B cell (primary cell): ENCODE measurements at regions of chr1 and their contacts with region 1.

Region 1: GRCh38 chr1:151594143-151594625 is 17.7 kb upstream of the SNX27 start:
- DNase-seq: peak; percentile 87
- ATAC-seq: peak; percentile 97
- H3K4me3 ChIP-seq: peak overlapping the region in 4 of 5 experiments; percentile 21 to 41 (median 30)
- H3K4me3 Mint-ChIP-seq: peak overlapping the region; percentile 71
- H3K27ac ChIP-seq: no peak overlapping the region
- H3K27ac Mint-ChIP-seq: peak overlapping the region; percentile 0
- H3K4me1 ChIP-seq: peaks cover 7 to 9% of the 10 kb centered on the region in 2 donors
- H3K4me1 Mint-ChIP-seq: peaks cover 9% of the 10 kb centered on the region
- H3K27me3 ChIP-seq: peaks cover 0 to 3% (median 0%) of the 10 kb centered on the region in 4 experiments
- H3K27me3 Mint-ChIP-seq: peaks cover 11% of the 10 kb centered on the region
- CTCF ChIP-seq: peak; percentile 94

Region 2: DNA sequence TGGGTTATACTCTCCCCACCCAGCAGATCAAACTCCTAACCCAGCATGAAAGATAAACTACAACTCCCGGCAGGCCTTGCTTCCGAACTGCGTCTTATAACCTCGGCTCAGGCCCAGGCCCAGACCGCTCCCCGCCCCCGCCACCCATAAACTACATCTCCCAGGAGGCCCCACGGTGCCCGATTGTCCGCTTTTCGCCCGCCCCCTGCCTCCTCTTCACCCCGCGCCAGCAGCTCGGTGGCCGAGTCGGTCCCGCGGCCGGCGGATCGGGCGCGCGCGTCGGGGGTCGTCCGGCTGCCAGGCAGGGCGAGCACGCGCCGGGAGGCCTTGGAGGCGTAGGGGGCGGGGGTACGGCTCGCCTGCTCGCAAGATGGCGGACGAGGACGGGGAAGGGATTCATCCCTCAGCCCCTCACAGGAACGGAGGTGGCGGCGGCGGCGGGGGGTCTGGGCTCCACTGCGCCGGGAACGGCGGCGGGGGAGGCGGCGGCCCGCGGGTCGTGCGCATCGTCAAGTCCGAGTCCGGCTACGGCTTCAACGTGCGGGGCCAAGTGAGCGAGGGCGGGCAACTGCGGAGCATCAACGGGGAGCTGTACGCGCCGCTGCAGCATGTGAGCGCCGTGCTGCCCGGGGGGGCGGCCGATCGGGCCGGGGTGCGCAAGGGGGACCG is 17.8 kb after region 1 on chr1 and contains the start of gene SNX27:
- CTCF ChIA-PET with region 1: interaction called, 11 read pairs
- POLR2A ChIA-PET with region 1: no interaction called
- intact Hi-C with region 1: no loop called
- DNase-seq: peak; percentile 94
- ATAC-seq: peak; percentile 96
- H3K4me3 ChIP-seq: peak within 1 kb of the TSS; percentile 52 to 94 (median 84)
- H3K4me3 Mint-ChIP-seq: peak within 1 kb of the TSS; percentile 91
- H3K27ac ChIP-seq: peak within 1 kb of the TSS in 1 of 2 donors; percentile 79
- H3K27ac Mint-ChIP-seq: peak within 1 kb of the TSS; percentile 94
- H3K4me1 ChIP-seq: peaks cover 11 to 18% of the 10 kb centered on the region in 2 donors
- H3K4me1 Mint-ChIP-seq: peaks cover 32% of the 10 kb centered on the region
- H3K27me3 ChIP-seq: peaks cover 0 to 3% (median 1%) of the 10 kb centered on the region in 4 experiments
- H3K27me3 Mint-ChIP-seq: peaks cover 5% of the 10 kb centered on the region
- CTCF ChIP-seq: no peak
- total RNA-seq, gene SNX27: 43.2 and 45.6 TPM in 2 replicates

Region 3: DNA sequence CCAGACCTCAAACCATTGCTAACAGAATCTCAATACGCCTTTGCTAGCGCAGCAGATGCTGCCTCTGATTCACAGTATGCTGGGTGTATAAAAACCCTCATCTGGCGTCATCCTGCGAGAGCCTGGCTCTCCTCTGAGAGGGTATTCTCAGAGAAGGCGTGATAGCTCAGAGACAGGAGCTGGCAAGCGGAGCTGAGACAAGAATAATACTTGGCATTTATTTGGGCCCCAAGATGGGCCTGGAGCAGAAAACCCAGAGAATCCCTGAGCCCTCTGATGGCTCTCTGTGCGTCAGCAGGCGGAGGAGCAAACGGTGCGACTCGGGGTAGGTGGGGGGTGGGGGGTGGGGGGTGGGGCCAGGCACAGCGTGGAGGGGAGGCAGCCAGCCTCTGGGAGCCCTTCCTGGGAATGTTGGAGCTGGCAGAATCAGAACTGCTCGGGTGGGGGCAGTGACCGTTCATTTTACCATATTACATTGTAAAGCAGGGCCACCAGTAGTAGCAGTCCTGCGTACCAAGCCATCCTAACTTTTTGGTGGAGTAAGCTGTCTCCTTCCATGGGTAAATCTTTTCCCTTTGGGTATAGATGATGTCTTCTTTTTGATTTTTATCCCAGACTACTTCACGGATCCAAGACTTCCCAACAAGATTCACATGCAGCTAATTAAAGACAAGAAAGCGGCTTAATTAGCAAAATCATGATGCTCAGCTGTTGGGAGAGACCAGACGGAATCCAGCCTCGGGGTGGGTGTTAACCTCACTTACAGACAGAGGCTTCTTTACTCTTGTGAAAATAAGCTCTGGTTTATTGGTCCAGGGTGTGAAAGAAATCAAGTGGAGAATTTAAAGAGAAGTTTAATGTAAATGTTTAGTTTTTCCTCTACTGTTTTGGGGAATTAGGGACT is 134.2 kb after region 1 on chr1:
- CTCF ChIA-PET with region 1: interaction called, 12 read pairs
- POLR2A ChIA-PET with region 1: no interaction called
- intact Hi-C with region 1: no loop called
- DNase-seq: no peak
- ATAC-seq: no peak
- H3K4me3 ChIP-seq: no peak overlapping the region
- H3K4me3 Mint-ChIP-seq: no peak overlapping the region
- H3K27ac ChIP-seq: no peak overlapping the region
- H3K27ac Mint-ChIP-seq: no peak overlapping the region
- H3K4me1 ChIP-seq: no peaks in the 10 kb centered on the region
- H3K4me1 Mint-ChIP-seq: no peaks in the 10 kb centered on the region
- H3K27me3 ChIP-seq: peaks cover 0 to 43% (median 22%) of the 10 kb centered on the region in 4 experiments
- H3K27me3 Mint-ChIP-seq: peaks cover 70% of the 10 kb centered on the region
- CTCF ChIP-seq: no peak

Region 4: GRCh38 chr1:151739590-151740375 is 145.6 kb after region 1 on chr1:
- CTCF ChIA-PET with region 1: interaction called, 12 read pairs
- POLR2A ChIA-PET with region 1: no interaction called
- intact Hi-C with region 1: loop called (anchors 1 kb)
- DNase-seq: no peak
- ATAC-seq: no peak
- H3K4me3 ChIP-seq: no peak overlapping the region
- H3K4me3 Mint-ChIP-seq: no peak overlapping the region
- H3K27ac ChIP-seq: no peak overlapping the region
- H3K27ac Mint-ChIP-seq: no peak overlapping the region
- H3K4me1 ChIP-seq: no peaks in the 10 kb centered on the region
- H3K4me1 Mint-ChIP-seq: no peaks in the 10 kb centered on the region
- H3K27me3 ChIP-seq: peaks cover 0 to 6% (median 1%) of the 10 kb centered on the region in 4 experiments
- H3K27me3 Mint-ChIP-seq: no peaks in the 10 kb centered on the region
- CTCF ChIP-seq: no peak

Region 5: DNA sequence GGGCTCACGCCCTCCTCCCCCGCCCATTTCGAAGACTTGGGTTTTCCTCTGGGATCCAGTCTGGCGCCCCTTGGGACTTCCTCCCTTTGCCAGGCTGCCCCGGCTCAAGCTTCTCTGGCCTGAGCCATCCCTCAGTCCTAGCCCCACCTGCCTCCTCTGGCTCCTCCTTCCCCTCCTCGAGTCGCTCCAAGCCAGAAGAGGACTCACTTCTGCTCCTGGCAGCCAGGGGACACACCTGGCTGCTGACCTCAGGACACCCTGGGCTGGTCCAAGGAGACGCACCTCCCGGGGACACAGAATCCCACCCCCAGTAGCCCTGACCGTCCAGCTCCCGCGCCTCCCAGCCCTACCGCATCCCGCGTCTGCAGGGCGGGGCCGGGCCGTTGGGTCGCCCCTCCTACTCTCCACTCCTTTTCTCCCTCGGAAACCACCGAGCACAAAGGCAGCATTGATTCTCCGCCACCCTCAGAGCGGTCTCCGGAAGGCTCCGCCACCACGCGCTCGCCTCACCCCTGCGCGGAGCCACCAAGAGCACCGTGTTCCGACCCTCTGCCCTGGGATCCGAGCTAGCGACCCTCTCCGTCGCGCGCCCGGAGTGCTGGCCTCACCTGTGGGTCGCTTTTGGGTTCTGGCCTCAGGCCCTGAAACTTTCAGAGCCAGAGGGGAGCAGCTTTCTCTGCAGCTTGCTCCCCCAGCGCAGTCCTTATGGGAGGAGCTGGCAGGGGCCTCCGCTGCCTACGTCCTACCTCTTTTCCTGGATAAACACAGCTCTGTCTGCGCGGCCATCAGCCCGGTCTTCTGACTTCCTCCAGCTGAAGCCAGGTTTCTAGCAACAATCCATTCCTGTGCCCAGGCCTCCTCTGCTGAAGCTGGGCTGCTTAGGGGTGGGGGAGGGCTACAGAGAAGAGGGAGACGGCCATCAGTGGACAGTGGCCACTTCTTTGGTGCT is 245.5 kb after region 1 on chr1 and contains the start of gene C2CD4D:
- CTCF ChIA-PET with region 1: interaction called, 14 read pairs
- POLR2A ChIA-PET with region 1: no interaction called
- intact Hi-C with region 1: loop called (anchors 1 kb)
- DNase-seq: peak; percentile 78
- ATAC-seq: peak; percentile 53
- H3K4me3 ChIP-seq: peak within 1 kb of the TSS in 4 of 5 experiments; percentile 36 to 56 (median 44)
- H3K4me3 Mint-ChIP-seq: peak within 1 kb of the TSS; percentile 87
- H3K27ac ChIP-seq: no peak within 1 kb of the TSS
- H3K27ac Mint-ChIP-seq: peak within 1 kb of the TSS; percentile 81
- H3K4me1 ChIP-seq: peaks cover 36 to 41% of the 10 kb centered on the region in 2 donors
- H3K4me1 Mint-ChIP-seq: peaks cover 38% of the 10 kb centered on the region
- H3K27me3 ChIP-seq: peaks cover 0 to 20% (median 7%) of the 10 kb centered on the region in 4 experiments
- H3K27me3 Mint-ChIP-seq: peaks cover 10% of the 10 kb centered on the region
- CTCF ChIP-seq: no peak
- total RNA-seq, gene C2CD4D: not detected in 2 replicates

Region 6: DNA sequence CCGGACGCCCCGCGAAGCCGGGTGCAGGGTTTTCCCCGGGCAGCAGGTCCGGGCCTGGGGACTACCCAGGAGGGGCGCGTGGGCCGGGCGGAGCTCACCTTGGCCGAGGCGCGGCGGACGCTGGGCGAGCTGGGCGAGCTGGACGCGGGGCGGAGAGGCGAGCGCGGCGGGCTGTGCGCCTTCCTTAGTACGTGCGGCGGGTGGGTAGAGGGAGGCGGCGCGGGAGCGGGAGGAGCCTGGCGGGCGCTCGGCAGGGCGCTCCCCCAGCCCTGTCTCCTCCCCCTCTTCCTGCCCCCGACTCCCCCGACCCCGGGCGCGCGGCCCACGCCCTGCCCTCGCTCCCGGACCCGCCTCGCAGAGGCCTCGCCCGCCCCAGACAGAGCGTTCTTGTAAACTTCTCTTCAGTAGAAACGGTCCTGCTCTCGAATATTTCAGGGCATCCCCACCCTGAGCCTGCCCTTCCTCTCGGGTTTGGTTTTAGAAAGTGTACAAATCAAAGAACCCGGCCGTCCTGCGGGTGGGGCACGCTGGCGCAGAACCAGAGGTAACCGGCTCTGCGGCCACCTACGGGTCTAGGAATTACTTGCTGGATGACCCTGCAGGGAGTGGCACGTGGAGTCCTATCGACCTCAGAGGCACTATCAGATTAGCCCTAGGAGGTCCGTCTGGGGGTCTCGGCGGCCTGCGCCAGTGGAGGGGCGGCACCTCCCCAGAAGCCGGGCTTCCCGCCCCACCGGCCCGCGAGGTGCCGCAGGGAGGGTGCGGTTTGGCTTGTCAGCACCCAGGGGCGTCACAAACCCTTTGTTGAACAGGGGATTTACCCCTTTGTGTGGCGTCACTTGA is 399.7 kb after region 1 on chr1 and contains the start of gene S100A10:
- CTCF ChIA-PET with region 1: interaction called, 4 read pairs
- POLR2A ChIA-PET with region 1: no interaction called
- intact Hi-C with region 1: loop called (anchors 1 kb)
- DNase-seq: peak; percentile 78
- ATAC-seq: peak; percentile 77
- H3K4me3 ChIP-seq: peak within 1 kb of the TSS; percentile 45 to 78 (median 67)
- H3K4me3 Mint-ChIP-seq: peak within 1 kb of the TSS; percentile 94
- H3K27ac ChIP-seq: peak within 1 kb of the TSS; percentile 51 to 73
- H3K27ac Mint-ChIP-seq: peak within 1 kb of the TSS; percentile 93
- H3K4me1 ChIP-seq: peaks cover 13 to 26% of the 10 kb centered on the region in 2 donors
- H3K4me1 Mint-ChIP-seq: peaks cover 30% of the 10 kb centered on the region
- H3K27me3 ChIP-seq: peaks cover 0 to 6% (median 2%) of the 10 kb centered on the region in 4 experiments
- H3K27me3 Mint-ChIP-seq: peaks cover 6% of the 10 kb centered on the region
- CTCF ChIP-seq: no peak
- total RNA-seq, gene S100A10: 40.4 and 47.1 TPM in 2 replicates